ENCODE measurements at regions of chr1 and their contacts with region 1.

Region 1: GRCh38 chr1:244461245-244462071 is at the start of gene CATSPERE:
- DNase-seq: peak; percentile 48 to 88 (median 74)
- ATAC-seq: peak; percentile 98
- H3K4me3 ChIP-seq: peak within 1 kb of the TSS; percentile 54 to 60
- H3K4me3 Mint-ChIP-seq: peak within 1 kb of the TSS; percentile 84
- H3K27ac ChIP-seq: peak within 1 kb of the TSS; percentile 66 to 71
- H3K27ac Mint-ChIP-seq: peak within 1 kb of the TSS; percentile 93
- H3K4me1 ChIP-seq: peaks cover 6% of the 10 kb centered on the region
- H3K4me1 Mint-ChIP-seq: peaks cover 17% of the 10 kb centered on the region
- H3K27me3 ChIP-seq: no peaks in the 10 kb centered on the region
- H3K27me3 Mint-ChIP-seq: no peaks in the 10 kb centered on the region
- CTCF ChIP-seq: no peak
- total RNA-seq, gene CATSPERE: 0.33 to 0.92 TPM

Region 2: DNA sequence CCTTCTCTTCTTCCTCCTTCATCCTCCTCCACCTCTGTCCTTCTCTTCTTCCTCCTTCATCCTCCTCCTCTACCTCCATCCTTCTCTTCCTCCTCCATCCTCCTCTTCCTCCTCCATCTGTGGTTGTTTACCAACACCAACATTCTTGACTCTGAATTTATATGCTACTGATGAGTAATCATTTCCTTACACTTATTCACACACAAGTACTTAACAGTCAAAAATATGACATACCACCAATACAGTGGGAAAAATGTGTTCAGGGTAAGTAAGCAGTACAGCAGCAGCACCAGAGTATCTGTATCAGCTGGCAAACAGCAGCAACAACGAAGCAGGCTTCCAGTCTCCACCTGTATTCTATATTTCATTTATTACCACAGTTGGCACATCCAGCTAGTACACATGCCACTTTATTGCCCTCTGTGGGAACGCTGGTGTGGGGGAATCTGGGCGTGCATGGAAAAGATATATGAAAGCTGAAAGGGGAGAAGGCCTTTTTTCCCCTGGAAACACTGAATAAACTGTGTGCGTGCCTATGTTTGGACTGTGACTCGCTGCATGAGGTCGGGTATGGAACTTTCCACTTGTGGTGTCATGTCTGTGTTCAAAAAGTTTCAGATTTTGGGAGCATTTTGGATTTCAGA is 25.8 kb before region 1 on chr1:
- CTCF ChIA-PET with region 1: no interaction called
- POLR2A ChIA-PET with region 1: no interaction called
- intact Hi-C with region 1: loop called in 1 of 2 experiments (anchors 2 kb)
- DNase-seq: no peak
- ATAC-seq: no peak
- H3K4me3 ChIP-seq: no peak overlapping the region
- H3K4me3 Mint-ChIP-seq: no peak overlapping the region
- H3K27ac ChIP-seq: no peak overlapping the region
- H3K27ac Mint-ChIP-seq: peak overlapping the region; percentile 57
- H3K4me1 ChIP-seq: no peaks in the 10 kb centered on the region
- H3K4me1 Mint-ChIP-seq: peaks cover 37% of the 10 kb centered on the region
- H3K27me3 ChIP-seq: no peaks in the 10 kb centered on the region
- H3K27me3 Mint-ChIP-seq: no peaks in the 10 kb centered on the region
- CTCF ChIP-seq: no peak

Region 3: DNA sequence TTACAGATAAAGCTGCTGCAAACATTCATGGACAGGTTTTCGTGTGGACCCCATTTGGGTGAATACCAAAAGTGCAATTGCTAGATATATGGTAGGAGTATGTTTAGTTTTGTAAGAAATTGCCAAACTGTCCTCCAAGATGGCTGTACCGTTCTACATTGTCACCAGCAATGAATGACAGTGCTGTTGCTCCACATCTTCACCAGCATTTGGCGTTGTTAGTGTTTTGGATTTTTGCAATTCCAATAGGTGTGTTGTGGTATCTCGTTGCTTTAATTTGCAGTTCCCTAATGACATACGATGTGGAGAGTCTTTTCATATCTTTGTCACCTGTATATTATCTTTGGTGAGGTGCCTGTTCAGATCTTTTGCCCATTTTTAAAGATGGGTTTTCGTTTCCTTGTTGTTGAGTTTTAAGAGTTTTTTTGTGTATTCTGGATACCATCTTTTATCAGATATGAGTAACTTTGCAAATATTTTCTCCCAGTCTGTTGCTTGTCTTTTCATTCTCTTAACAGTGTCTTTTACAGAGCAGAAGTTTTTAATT is 11.7 kb after region 1 on chr1:
- CTCF ChIA-PET with region 1: no interaction called
- POLR2A ChIA-PET with region 1: no interaction called
- intact Hi-C with region 1: no loop called
- DNase-seq: no peak
- ATAC-seq: no peak
- H3K4me3 ChIP-seq: no peak overlapping the region
- H3K4me3 Mint-ChIP-seq: no peak overlapping the region
- H3K27ac ChIP-seq: no peak overlapping the region
- H3K27ac Mint-ChIP-seq: no peak overlapping the region
- H3K4me1 ChIP-seq: no peaks in the 10 kb centered on the region
- H3K4me1 Mint-ChIP-seq: no peaks in the 10 kb centered on the region
- H3K27me3 ChIP-seq: no peaks in the 10 kb centered on the region
- H3K27me3 Mint-ChIP-seq: no peaks in the 10 kb centered on the region
- CTCF ChIP-seq: no peak

Region 4: GRCh38 chr1:245000872-245001188 is 539.4 kb after region 1 on chr1:
- CTCF ChIA-PET with region 1: no interaction called
- POLR2A ChIA-PET with region 1: no interaction called
- intact Hi-C with region 1: no loop called
- DNase-seq: no peak
- ATAC-seq: no peak
- H3K4me3 ChIP-seq: no peak overlapping the region
- H3K4me3 Mint-ChIP-seq: no peak overlapping the region
- H3K27ac ChIP-seq: no peak overlapping the region
- H3K27ac Mint-ChIP-seq: no peak overlapping the region
- H3K4me1 ChIP-seq: no peaks in the 10 kb centered on the region
- H3K4me1 Mint-ChIP-seq: no peaks in the 10 kb centered on the region
- H3K27me3 ChIP-seq: no peaks in the 10 kb centered on the region
- H3K27me3 Mint-ChIP-seq: no peaks in the 10 kb centered on the region
- CTCF ChIP-seq: no peak

Measured in CD8-positive, alpha-beta T cell (primary cell).